Dendritic cell treated with granulocyte-macrophage colony-stimulating factor and Interleukin-4, amounts not matched to agents 40 ng/mL and 50 ng/mL, for 4 days (primary cell): ENCODE measurements at regions of chr2 and their contacts with region 1.

Region 1: DNA sequence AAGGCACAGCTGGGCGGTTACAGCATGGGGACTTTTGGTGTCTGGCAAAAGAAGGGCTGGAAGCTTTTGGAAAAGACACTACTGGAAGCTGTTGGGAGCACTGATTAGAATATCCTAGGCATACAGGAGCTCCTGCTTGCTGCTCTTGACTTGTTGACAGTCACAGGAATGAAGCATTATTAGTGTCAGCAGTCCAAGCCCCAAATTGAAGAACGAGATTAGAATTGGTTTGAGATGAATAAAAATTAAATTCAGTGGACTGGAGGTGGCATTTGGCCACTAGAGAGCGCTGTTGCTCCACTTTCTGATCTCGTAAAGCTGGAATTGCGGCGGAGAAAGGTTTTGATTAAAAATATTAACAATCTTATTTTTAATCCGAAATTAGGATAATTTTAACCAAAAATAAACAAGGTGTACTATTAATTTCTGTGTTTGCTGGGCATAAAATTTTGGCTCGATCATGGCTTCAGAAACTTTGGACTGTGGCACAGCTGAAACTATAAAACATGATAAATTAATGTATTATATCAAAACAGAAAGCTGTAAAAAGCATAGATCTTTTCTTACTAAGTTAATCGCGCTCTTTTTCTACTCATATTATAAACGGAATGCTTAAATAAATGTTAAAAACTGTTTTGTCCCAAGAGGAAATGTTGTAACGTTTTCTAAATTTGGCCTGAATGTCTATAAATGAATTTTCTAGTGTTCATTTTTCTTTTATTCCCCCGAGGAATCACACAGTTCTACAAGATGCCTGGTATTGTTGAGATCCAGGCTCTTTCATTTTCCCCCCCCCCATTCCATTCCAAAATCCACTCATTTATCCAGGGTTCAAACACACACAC is 2.4 kb upstream of the HOXD8 start:
- H3K4me3 Mint-ChIP-seq: no peak overlapping the region
- H3K27ac Mint-ChIP-seq: no peak overlapping the region
- H3K4me1 Mint-ChIP-seq: peaks cover 46% of the 10 kb centered on the region
- H3K27me3 Mint-ChIP-seq: peaks cover 85% of the 10 kb centered on the region

Region 2: GRCh38 chr2:176454893-176455811 is 328.0 kb after region 1 on chr2:
- intact Hi-C with region 1: loop called (anchors 1 kb)
- H3K4me3 Mint-ChIP-seq: no peak overlapping the region
- H3K27ac Mint-ChIP-seq: no peak overlapping the region
- H3K4me1 Mint-ChIP-seq: no peaks in the 10 kb centered on the region
- H3K27me3 Mint-ChIP-seq: peaks cover 21% of the 10 kb centered on the region

Region 3: GRCh38 chr2:176638167-176639015 is 511.2 kb after region 1 on chr2:
- intact Hi-C with region 1: loop called (anchors 5 kb)
- H3K4me3 Mint-ChIP-seq: peak overlapping the region; percentile 77
- H3K27ac Mint-ChIP-seq: no peak overlapping the region
- H3K4me1 Mint-ChIP-seq: no peaks in the 10 kb centered on the region
- H3K27me3 Mint-ChIP-seq: peaks cover 58% of the 10 kb centered on the region

Region 4: GRCh38 chr2:176653479-176654443 is 526.6 kb after region 1 on chr2:
- intact Hi-C with region 1: loop called (anchors 1 kb)
- H3K4me3 Mint-ChIP-seq: no peak overlapping the region
- H3K27ac Mint-ChIP-seq: no peak overlapping the region
- H3K4me1 Mint-ChIP-seq: no peaks in the 10 kb centered on the region
- H3K27me3 Mint-ChIP-seq: peaks cover 42% of the 10 kb centered on the region

Region 5: GRCh38 chr2:176814306-176815052 is 687.3 kb after region 1 on chr2:
- intact Hi-C with region 1: loop called (anchors 10 kb)
- H3K4me3 Mint-ChIP-seq: no peak overlapping the region
- H3K27ac Mint-ChIP-seq: no peak overlapping the region
- H3K4me1 Mint-ChIP-seq: no peaks in the 10 kb centered on the region
- H3K27me3 Mint-ChIP-seq: no peaks in the 10 kb centered on the region